ENCODE measurements at regions of chr2 and their contacts with region 1.

Region 1: GRCh38 chr2:117470311-117471095 is 344.0 kb upstream of the DDX18 start:
- DNase-seq: peak; percentile 54 to 64
- H3K4me3 ChIP-seq: no peak overlapping the region
- H3K4me3 Mint-ChIP-seq: no peak overlapping the region
- H3K27ac Mint-ChIP-seq: no peak overlapping the region
- H3K4me1 ChIP-seq: no peaks in the 10 kb centered on the region
- H3K4me1 Mint-ChIP-seq: no peaks in the 10 kb centered on the region
- H3K27me3 ChIP-seq: no peaks in the 10 kb centered on the region
- H3K27me3 Mint-ChIP-seq: peaks cover 6% of the 10 kb centered on the region
- CTCF ChIP-seq: peak; percentile 58 to 72

Region 2: GRCh38 chr2:117536139-117536538 is 65.6 kb after region 1 on chr2:
- CTCF ChIA-PET with region 1: no interaction called
- POLR2A ChIA-PET with region 1: no interaction called
- intact Hi-C with region 1: loop called (anchors 1 kb)
- DNase-seq: peak in 1 of 2 experiments; percentile 25
- H3K4me3 ChIP-seq: no peak overlapping the region
- H3K4me3 Mint-ChIP-seq: no peak overlapping the region
- H3K27ac Mint-ChIP-seq: no peak overlapping the region
- H3K4me1 ChIP-seq: no peaks in the 10 kb centered on the region
- H3K4me1 Mint-ChIP-seq: no peaks in the 10 kb centered on the region
- H3K27me3 ChIP-seq: no peaks in the 10 kb centered on the region
- H3K27me3 Mint-ChIP-seq: no peaks in the 10 kb centered on the region
- CTCF ChIP-seq: peak; percentile 38 to 49

Region 3: DNA sequence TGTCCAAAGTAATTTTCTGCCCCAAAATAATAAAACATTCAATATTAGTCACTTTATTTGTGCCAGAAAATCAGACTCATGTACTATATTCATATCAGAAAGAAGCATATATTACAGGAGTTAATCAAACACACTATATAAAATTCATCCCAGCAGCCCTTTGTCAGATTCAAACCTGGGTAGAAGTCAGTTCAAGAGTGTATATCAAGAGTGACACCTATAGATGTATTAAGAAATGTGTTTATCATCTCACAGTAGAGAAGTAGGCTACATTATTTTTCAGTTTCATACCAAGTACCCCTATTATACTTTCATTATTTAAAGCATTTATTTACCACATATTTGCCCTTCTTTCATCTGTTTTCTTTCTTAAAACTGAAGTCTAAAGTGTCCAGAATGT is 150.8 kb after region 1 on chr2:
- CTCF ChIA-PET with region 1: no interaction called
- POLR2A ChIA-PET with region 1: no interaction called
- intact Hi-C with region 1: loop called (anchors 5 kb)
- DNase-seq: no peak
- H3K4me3 ChIP-seq: no peak overlapping the region
- H3K4me3 Mint-ChIP-seq: no peak overlapping the region
- H3K27ac Mint-ChIP-seq: no peak overlapping the region
- H3K4me1 ChIP-seq: no peaks in the 10 kb centered on the region
- H3K4me1 Mint-ChIP-seq: no peaks in the 10 kb centered on the region
- H3K27me3 ChIP-seq: no peaks in the 10 kb centered on the region
- H3K27me3 Mint-ChIP-seq: no peaks in the 10 kb centered on the region
- CTCF ChIP-seq: no peak

Region 4: GRCh38 chr2:117703858-117704257 is 233.4 kb after region 1 on chr2:
- CTCF ChIA-PET with region 1: no interaction called
- POLR2A ChIA-PET with region 1: no interaction called
- intact Hi-C with region 1: loop called (anchors 5 kb)
- DNase-seq: no peak
- H3K4me3 ChIP-seq: no peak overlapping the region
- H3K4me3 Mint-ChIP-seq: no peak overlapping the region
- H3K27ac Mint-ChIP-seq: no peak overlapping the region
- H3K4me1 ChIP-seq: no peaks in the 10 kb centered on the region
- H3K4me1 Mint-ChIP-seq: no peaks in the 10 kb centered on the region
- H3K27me3 ChIP-seq: no peaks in the 10 kb centered on the region
- H3K27me3 Mint-ChIP-seq: no peaks in the 10 kb centered on the region
- CTCF ChIP-seq: peak in 1 of 2 experiments; percentile 3

Region 5: DNA sequence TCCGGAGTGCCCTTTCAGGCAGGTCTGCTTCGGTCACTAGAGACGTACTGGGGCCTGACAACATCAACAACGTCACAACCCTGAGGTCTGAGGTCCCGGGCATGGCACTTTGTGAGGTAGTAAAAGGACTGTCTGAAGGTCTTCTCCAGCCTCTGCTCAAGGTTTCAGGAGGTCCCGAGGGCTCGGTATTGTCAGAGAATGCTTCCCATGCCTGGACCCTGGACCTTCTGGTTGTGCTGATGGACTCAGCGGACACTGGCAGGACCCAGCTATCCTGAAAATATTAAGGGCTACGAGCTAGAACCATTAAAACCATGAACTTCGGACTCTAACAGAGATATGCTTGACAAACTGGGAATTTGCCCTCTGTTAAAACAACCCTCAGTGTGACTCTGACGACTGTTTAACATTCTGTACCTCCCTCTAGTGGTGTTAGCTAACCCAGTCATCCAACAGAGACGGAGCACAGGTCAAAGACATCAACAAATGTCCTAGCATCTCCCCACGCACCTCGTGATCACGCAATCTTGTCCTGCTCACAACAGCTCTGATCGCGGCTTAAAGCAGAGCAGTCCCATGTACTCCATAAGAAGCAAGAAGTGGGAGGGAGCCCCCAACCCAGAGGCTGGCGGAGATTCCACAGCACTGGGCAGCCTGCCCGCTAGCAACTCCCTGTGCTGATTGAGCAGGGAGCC is 446.9 kb after region 1 on chr2:
- CTCF ChIA-PET with region 1: no interaction called
- POLR2A ChIA-PET with region 1: no interaction called
- intact Hi-C with region 1: no loop called
- DNase-seq: peak; percentile 42 to 51
- H3K4me3 ChIP-seq: no peak overlapping the region
- H3K4me3 Mint-ChIP-seq: no peak overlapping the region
- H3K27ac Mint-ChIP-seq: no peak overlapping the region
- H3K4me1 ChIP-seq: peaks cover 3% of the 10 kb centered on the region; the same call in 1 of the 2 replicates
- H3K4me1 Mint-ChIP-seq: no peaks in the 10 kb centered on the region
- H3K27me3 ChIP-seq: no peaks in the 10 kb centered on the region
- H3K27me3 Mint-ChIP-seq: no peaks in the 10 kb centered on the region
- CTCF ChIP-seq: peak; percentile 45 to 80

Measured in Caco-2 (cell line).